Colonic mucosa (tissue), 4 donors: ENCODE measurements at regions of chr5 and their contacts with region 1.

Region 1: GRCh38 chr5:6576861-6577501 is 55.9 kb downstream of the NSUN2 start:
- DNase-seq: no peak
- H3K4me3 ChIP-seq: no peak overlapping the region
- H3K27ac ChIP-seq: no peak overlapping the region
- H3K4me1 ChIP-seq: no peaks in the 10 kb centered on the region
- H3K27me3 ChIP-seq: no peaks in the 10 kb centered on the region
- CTCF ChIP-seq: no peak

Region 2: GRCh38 chr5:5886812-5887486 is 690.0 kb before region 1 on chr5:
- intact Hi-C with region 1: loop called (anchors 5 kb)
- DNase-seq: peak; percentile 25
- H3K4me3 ChIP-seq: no peak overlapping the region
- H3K27ac ChIP-seq: no peak overlapping the region
- H3K4me1 ChIP-seq: no peaks in the 10 kb centered on the region
- H3K27me3 ChIP-seq: no peaks in the 10 kb centered on the region
- CTCF ChIP-seq: peak; percentile 71

Region 3: GRCh38 chr5:6202149-6202967 is 374.6 kb before region 1 on chr5:
- intact Hi-C with region 1: no loop called
- DNase-seq: no peak
- H3K4me3 ChIP-seq: no peak overlapping the region
- H3K27ac ChIP-seq: no peak overlapping the region
- H3K4me1 ChIP-seq: no peaks in the 10 kb centered on the region
- H3K27me3 ChIP-seq: no peaks in the 10 kb centered on the region
- CTCF ChIP-seq: no peak